ENCODE measurements at regions of chr10 and their contacts with region 1.

Region 1: GRCh38 chr10:23702977-23703414 is 264.1 kb downstream of the OTUD1 start:
- DNase-seq: peak; percentile 70
- ATAC-seq: peak; percentile 99
- H3K4me3 ChIP-seq: no peak overlapping the region
- H3K27ac ChIP-seq: no peak overlapping the region
- H3K4me1 ChIP-seq: no peaks in the 10 kb centered on the region
- H3K27me3 ChIP-seq: no peaks in the 10 kb centered on the region
- CTCF ChIP-seq: peak; percentile 65 to 73 (median 69)
- POLR2A ChIP-seq: no peak
- RAD21 ChIP-seq: peak; percentile 72

Region 2: DNA sequence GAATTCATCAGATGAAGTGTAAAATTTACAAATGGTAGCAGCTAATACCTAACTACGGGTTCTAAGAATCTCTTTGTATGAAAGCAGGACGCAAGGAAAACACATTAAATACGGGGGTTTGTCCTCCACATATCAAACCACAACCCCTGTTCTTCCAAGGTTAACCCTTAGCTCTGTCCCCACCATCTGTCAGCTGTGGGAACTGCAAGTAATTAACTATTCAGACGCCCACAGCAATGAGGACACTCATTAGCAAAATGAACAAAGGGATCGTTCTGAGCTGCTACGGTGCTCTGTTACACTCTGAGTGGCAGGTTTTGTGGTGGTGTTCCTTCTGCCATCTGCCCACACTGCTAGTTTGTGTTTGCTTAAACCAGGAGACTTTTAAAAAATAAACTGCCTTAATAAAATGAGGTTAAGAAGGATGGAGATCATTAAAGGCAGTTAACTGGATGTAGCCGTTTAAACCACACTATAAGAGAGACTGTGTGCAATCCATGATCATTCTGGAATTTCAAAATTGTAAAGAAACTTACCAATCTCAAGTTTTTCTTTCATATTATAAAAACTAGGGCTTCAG is 409.8 kb before region 1 on chr10:
- CTCF ChIA-PET with region 1: no interaction called
- POLR2A ChIA-PET with region 1: no interaction called
- RAD21 ChIA-PET with region 1: no interaction called
- intact Hi-C with region 1: loop called (anchors 2 kb)
- DNase-seq: peak; percentile 33
- ATAC-seq: peak; percentile 94
- H3K4me3 ChIP-seq: no peak overlapping the region
- H3K27ac ChIP-seq: no peak overlapping the region
- H3K4me1 ChIP-seq: no peaks in the 10 kb centered on the region
- H3K27me3 ChIP-seq: peaks cover 12% of the 10 kb centered on the region
- CTCF ChIP-seq: peak; percentile 60 to 68 (median 67)
- POLR2A ChIP-seq: no peak
- RAD21 ChIP-seq: peak; percentile 73

Region 3: DNA sequence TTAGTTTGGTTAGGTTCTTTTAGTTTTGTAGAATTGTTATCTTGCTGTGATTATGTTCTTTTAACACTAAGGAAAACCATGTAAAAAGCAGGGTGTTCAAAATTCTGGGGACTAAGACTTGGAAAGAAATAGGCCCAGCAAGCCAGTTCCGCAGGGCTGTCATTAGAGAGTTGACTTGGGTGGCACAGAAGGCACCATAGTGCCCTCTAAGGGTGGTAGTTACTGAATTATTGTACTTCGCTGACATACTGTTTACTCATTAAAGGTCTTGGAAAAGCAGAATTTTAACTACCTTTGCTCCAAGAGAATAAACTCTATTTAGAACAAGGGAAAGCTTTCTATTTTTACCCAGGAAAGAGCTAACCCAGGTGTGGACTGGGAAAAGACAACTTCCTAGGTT is 177.6 kb before region 1 on chr10:
- CTCF ChIA-PET with region 1: no interaction called
- POLR2A ChIA-PET with region 1: no interaction called
- RAD21 ChIA-PET with region 1: no interaction called
- intact Hi-C with region 1: loop called (anchors 10 kb)
- DNase-seq: no peak
- ATAC-seq: peak; percentile 83
- H3K4me3 ChIP-seq: no peak overlapping the region
- H3K27ac ChIP-seq: no peak overlapping the region
- H3K4me1 ChIP-seq: no peaks in the 10 kb centered on the region
- H3K27me3 ChIP-seq: peaks cover 9% of the 10 kb centered on the region; the same call in 1 of the 2 replicates
- CTCF ChIP-seq: peak; percentile 44 to 48 (median 45); a peak in 5 of 6 replicates
- POLR2A ChIP-seq: no peak
- RAD21 ChIP-seq: peak; percentile 67

Region 4: DNA sequence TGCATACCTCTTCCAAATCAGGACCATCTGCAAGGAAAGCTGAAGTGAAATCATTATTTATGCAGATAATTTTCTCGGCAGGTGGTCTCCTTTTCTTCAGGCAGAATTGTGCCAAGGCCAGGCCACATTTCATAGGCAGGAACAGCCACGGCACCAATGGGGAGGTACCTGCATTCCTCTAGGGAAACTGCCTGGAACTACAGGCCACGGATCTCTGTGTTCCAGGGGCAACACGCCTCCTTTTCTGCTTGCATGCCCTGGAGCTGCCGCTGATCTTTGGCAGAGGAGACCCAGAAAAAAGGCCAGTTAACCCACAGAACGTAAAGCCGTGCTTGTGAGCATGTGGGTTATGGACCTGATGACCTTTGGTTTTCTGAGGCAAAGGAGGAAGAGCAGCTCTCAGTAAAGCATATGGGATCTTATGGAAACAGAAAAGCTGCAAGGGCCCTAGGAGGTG is 394.8 kb after region 1 on chr10:
- CTCF ChIA-PET with region 1: no interaction called
- POLR2A ChIA-PET with region 1: no interaction called
- RAD21 ChIA-PET with region 1: no interaction called
- intact Hi-C with region 1: no loop called
- DNase-seq: no peak
- ATAC-seq: no peak
- H3K4me3 ChIP-seq: no peak overlapping the region
- H3K27ac ChIP-seq: no peak overlapping the region
- H3K4me1 ChIP-seq: no peaks in the 10 kb centered on the region
- H3K27me3 ChIP-seq: no peaks in the 10 kb centered on the region
- CTCF ChIP-seq: no peak
- POLR2A ChIP-seq: no peak
- RAD21 ChIP-seq: no peak